Mucosa of descending colon (tissue), 3 donors: ENCODE measurements at regions of chr3 and their contacts with region 1.

Region 1: GRCh38 chr3:194682694-194683310 is 2.9 kb upstream of the FAM43A start:
- DNase-seq: peak; percentile 72 to 80 (median 77)
- ATAC-seq: peak; percentile 70
- H3K4me3 ChIP-seq: no peak overlapping the region
- H3K4me1 ChIP-seq: peaks cover 14% of the 10 kb centered on the region
- CTCF ChIP-seq: peak; percentile 63

Region 2: DNA sequence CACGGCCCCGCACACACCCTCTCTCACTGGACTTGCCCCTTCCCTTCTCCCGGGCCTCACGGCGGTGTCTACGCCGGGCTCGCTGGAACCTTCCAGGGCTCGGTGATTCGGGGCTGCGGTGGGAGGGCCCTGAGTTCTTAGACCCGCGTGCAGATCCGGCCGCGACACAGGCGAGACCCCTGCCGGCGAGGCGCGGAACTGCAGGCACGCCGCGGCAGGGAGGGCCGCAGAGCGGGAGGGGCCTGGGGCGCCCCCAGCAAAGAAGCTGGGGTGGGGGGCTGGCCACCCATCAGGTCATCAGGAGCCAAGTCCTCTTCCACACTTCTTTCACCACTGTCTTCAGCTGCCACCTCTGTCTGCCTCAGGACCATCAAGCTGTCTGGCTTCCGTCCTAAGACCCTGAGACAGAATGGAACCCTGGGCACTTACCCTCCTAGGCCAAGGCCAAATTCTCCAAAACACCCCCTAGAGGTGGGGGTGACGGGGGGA is 423.7 kb after region 1 on chr3:
- intact Hi-C with region 1: loop called (anchors 5 kb)
- DNase-seq: peak; percentile 64 to 77 (median 70)
- ATAC-seq: peak; percentile 68
- H3K4me3 ChIP-seq: no peak overlapping the region
- H3K4me1 ChIP-seq: no peaks in the 10 kb centered on the region
- CTCF ChIP-seq: peak; percentile 100

Region 3: GRCh38 chr3:195259475-195260279 is 576.9 kb after region 1 on chr3:
- intact Hi-C with region 1: loop called (anchors 5 to 10 kb)
- DNase-seq: peak; percentile 88 to 95 (median 92)
- ATAC-seq: peak; percentile 92
- H3K4me3 ChIP-seq: peak overlapping the region; percentile 28
- H3K4me1 ChIP-seq: peaks cover 25% of the 10 kb centered on the region
- CTCF ChIP-seq: peak; percentile 94